ENCODE measurements at regions of chr21 and their contacts with region 1.

Region 1: DNA sequence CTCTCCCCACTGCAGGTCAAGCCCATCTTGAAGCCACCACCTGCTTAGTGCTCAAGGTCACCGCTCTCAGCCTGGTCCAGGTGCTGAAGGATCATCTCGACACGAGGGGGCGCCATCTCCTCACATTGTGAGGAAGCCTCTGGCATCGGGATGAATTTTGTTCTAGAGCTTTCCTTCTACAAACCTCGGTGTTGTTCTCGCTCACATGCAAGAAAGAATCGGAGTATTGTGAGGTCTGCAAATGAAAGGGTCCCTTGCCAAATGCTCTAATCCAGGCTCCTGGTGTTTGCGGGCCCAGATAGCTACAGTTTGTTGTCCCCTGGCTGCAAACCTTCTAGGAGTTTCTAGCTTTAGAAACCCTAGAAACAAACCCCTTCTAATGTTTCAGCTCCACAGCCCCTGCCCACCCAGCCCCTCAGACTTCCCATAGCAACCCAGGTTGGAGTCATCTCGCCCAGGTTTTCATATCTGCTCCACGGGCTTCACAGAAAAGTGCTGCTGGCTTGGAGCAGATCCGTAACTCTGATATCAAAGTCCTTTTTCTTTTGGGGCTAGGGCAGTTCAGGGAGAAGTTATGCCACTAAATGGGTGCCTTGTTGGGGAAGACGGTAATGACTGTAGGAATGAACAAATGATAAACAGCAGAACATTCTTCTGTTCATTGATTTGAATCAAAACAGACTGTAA is 8.6 kb upstream of the ATP5PO start:
- H3K4me3 ChIP-seq: no peak overlapping the region
- H3K27ac ChIP-seq: no peak overlapping the region
- H3K4me1 ChIP-seq: no peaks in the 10 kb centered on the region
- CTCF ChIP-seq: peak; percentile 94

Region 2: GRCh38 chr21:33947451-33948095 is 23.4 kb after region 1 on chr21:
- CTCF ChIA-PET with region 1: interaction called, 17 read pairs
- POLR2A ChIA-PET with region 1: interaction called, 4 read pairs
- H3K4me3 ChIP-seq: peak overlapping the region; percentile 21
- H3K27ac ChIP-seq: peak overlapping the region; percentile 19
- H3K4me1 ChIP-seq: peaks cover 9% of the 10 kb centered on the region
- CTCF ChIP-seq: no peak

Region 3: DNA sequence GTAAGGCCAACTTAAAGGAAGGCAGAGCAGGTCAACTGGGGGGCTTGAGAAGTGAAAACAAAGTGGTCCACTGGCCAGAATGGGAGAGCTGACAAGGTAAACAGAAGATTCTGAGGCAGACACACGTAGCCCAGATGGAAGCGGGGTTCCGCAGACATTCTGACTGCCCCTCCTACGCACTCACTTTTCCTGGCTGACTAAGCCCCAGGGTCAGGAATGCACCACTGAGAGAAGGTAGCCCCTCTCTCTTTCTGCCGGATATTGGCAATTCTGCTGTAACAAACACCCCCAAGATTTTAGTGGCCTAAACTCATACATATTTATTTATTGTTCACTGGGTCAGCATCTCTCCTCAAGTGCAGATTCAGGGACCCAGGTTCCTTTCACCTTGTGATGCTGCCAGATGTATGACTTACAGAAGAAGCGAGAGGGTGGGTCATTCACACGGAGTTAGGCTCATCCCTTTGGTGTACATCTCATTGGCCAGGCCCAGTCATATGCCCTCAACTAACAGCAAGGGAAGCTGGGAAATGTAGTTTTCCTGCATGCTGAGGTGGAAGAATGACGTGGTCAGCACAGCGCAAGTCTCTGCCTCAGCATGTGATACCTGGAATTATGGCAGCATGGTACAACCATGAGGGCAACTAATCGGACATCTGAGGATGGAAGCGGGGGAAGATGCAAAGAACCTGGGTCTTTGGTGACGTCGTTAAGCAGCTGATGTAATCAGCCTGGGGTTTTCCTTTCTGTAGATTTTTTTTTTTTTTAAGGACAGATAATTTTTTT is 105.7 kb after region 1 on chr21:
- CTCF ChIA-PET with region 1: interaction called, 14 read pairs
- POLR2A ChIA-PET with region 1: no interaction called
- H3K4me3 ChIP-seq: no peak overlapping the region
- H3K27ac ChIP-seq: no peak overlapping the region
- H3K4me1 ChIP-seq: no peaks in the 10 kb centered on the region
- CTCF ChIP-seq: no peak

Region 4: DNA sequence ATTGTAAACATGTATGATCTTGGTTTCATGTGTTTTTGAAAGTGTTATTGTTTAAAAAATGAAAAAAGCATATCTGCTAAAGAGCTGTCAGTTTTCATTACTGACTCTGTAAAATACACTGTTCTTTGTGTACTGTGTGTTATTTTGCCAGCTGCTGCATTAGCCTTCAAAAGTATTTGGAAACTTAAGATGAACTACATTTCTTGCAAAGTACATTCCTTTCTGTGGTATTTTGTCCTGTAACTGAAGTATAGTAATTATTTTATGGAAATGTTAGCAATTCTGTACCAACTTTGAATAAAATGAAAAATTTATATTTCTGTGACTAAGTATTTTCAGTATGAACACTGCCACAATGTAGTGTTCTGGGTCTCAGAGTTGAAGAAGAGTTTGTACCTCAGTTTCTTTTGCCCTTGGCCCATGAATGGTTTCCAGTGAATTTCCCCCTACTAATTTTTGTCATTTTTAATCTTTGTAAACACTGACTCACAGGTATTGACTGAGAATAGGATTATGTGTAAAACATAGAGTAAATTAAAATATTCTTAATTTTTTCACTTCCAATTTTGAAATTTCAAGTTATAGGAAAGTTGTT is 181.8 kb after region 1 on chr21:
- CTCF ChIA-PET with region 1: interaction called, 11 read pairs
- POLR2A ChIA-PET with region 1: no interaction called
- H3K4me3 ChIP-seq: no peak overlapping the region
- H3K27ac ChIP-seq: no peak overlapping the region
- H3K4me1 ChIP-seq: no peaks in the 10 kb centered on the region
- CTCF ChIP-seq: no peak

Region 5: GRCh38 chr21:34202553-34203372 is 278.5 kb after region 1 on chr21:
- CTCF ChIA-PET with region 1: interaction called, 39 read pairs
- POLR2A ChIA-PET with region 1: no interaction called
- H3K4me3 ChIP-seq: no peak overlapping the region
- H3K27ac ChIP-seq: no peak overlapping the region; the same call in 1 of the 2 replicates
- H3K4me1 ChIP-seq: peaks cover 2% of the 10 kb centered on the region; the same call in 1 of the 2 replicates
- CTCF ChIP-seq: no peak

Region 6: DNA sequence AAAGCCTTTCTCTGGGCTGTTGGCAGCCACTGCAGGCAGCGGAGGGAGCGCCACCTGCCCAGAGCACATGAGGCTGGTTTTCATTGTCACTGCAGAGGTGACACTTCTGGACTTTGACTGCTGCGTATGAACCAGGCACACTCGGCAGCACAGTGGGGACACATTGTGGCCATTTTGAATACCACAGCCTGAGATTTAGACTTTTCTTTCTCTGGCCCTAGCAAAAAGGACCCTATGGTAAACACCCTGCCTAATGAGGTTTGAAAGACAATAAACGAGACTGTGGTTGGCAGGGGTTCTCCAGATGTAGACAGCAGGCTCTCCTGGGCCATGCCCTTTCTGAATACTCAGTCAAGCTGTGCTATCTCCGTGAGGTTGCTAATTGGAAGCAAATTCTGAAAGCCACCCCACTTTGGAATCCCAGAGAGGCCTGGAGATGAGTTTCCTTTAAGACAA is 427.6 kb after region 1 on chr21:
- CTCF ChIA-PET with region 1: interaction called, 219 read pairs
- POLR2A ChIA-PET with region 1: interaction called, 6 read pairs
- H3K4me3 ChIP-seq: no peak overlapping the region
- H3K27ac ChIP-seq: no peak overlapping the region
- H3K4me1 ChIP-seq: no peaks in the 10 kb centered on the region
- CTCF ChIP-seq: peak; percentile 93